Activated B cell treated with CpG ODN at 0.5 μM for 24 hours (primary cell): ENCODE measurements at regions of chr18 and their contacts with region 1.

Region 1: GRCh38 chr18:62714671-62715435 is 488 bp upstream of the PHLPP1 start:
- DNase-seq: peak; percentile 88
- ATAC-seq: peak; percentile 79
- H3K4me3 Mint-ChIP-seq: peak overlapping the region; percentile 91
- H3K27ac Mint-ChIP-seq: peak overlapping the region; percentile 89
- H3K4me1 Mint-ChIP-seq: peaks cover 37% of the 10 kb centered on the region
- H3K27me3 Mint-ChIP-seq: no peaks in the 10 kb centered on the region
- CTCF ChIP-seq: no peak

Region 2: GRCh38 chr18:62186774-62187542 is 527.9 kb before region 1 on chr18 and contains the starts of genes PIGN and RELCH:
- CTCF ChIA-PET with region 1: no interaction called
- POLR2A ChIA-PET with region 1: no interaction called
- intact Hi-C with region 1: loop called (anchors 1 kb)
- DNase-seq: peak; percentile 73
- ATAC-seq: peak; percentile 94
- H3K4me3 Mint-ChIP-seq: peak within 1 kb of the TSS; percentile 98
- H3K27ac Mint-ChIP-seq: peak within 1 kb of the TSS; percentile 95
- H3K4me1 Mint-ChIP-seq: peaks cover 58% of the 10 kb centered on the region
- H3K27me3 Mint-ChIP-seq: no peaks in the 10 kb centered on the region
- CTCF ChIP-seq: no peak
- total RNA-seq, gene PIGN: 26.4 and 29.4 TPM in 2 replicates
- total RNA-seq, gene RELCH: 45.4 and 59.0 TPM in 2 replicates

Region 3: GRCh38 chr18:62637807-62638687 is 76.8 kb before region 1 on chr18:
- CTCF ChIA-PET with region 1: interaction called, 3 read pairs
- POLR2A ChIA-PET with region 1: no interaction called
- intact Hi-C with region 1: loop called (anchors 1 kb)
- DNase-seq: peak; percentile 20
- ATAC-seq: peak; percentile 50
- H3K4me3 Mint-ChIP-seq: no peak overlapping the region
- H3K27ac Mint-ChIP-seq: no peak overlapping the region
- H3K4me1 Mint-ChIP-seq: no peaks in the 10 kb centered on the region
- H3K27me3 Mint-ChIP-seq: peaks cover 7% of the 10 kb centered on the region
- CTCF ChIP-seq: no peak

Region 4: GRCh38 chr18:62784966-62785413 is 70.1 kb after region 1 on chr18:
- CTCF ChIA-PET with region 1: no interaction called
- POLR2A ChIA-PET with region 1: interaction called, 4 read pairs
- intact Hi-C with region 1: loop called (anchors 1 kb)
- DNase-seq: no peak
- ATAC-seq: peak; percentile 25
- H3K4me3 Mint-ChIP-seq: peak overlapping the region; percentile 28
- H3K27ac Mint-ChIP-seq: no peak overlapping the region
- H3K4me1 Mint-ChIP-seq: peaks cover 26% of the 10 kb centered on the region
- H3K27me3 Mint-ChIP-seq: no peaks in the 10 kb centered on the region
- CTCF ChIP-seq: no peak

Region 5: DNA sequence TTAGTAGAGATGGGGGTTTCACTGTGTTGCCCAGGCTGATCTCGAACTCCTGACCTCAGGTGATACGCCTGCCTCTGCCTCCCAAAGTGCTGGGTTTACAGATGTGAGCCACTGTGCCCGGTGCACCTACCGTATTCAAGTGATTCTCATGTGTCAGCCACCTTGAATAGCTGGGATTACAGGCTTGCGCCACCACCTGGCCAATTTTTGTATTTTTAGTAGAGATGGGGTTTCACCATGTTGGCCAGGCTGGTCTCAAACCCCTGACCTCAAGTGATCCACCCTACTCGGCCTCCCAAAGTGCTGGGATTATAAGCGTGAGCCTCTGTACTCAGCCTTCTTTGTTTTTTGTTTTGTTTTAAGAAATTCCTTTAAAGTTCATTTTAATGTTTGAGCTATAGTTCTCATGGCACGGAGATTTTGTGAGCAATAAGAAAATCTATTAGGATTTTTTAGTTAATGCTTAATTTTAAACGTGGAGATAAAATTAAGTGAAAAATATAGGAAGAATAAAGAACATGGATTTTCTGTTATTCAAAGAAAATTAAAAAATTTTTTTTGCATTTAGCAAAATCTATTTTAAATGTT is 243.1 kb after region 1 on chr18:
- CTCF ChIA-PET with region 1: interaction called, 34 read pairs
- POLR2A ChIA-PET with region 1: interaction called, 8 read pairs
- intact Hi-C with region 1: loop called (anchors 1 kb)
- DNase-seq: no peak
- ATAC-seq: peak; percentile 77
- H3K4me3 Mint-ChIP-seq: no peak overlapping the region
- H3K27ac Mint-ChIP-seq: no peak overlapping the region
- H3K4me1 Mint-ChIP-seq: no peaks in the 10 kb centered on the region
- H3K27me3 Mint-ChIP-seq: no peaks in the 10 kb centered on the region
- CTCF ChIP-seq: no peak

Region 6: GRCh38 chr18:63155169-63155852 is 440.5 kb after region 1 on chr18:
- CTCF ChIA-PET with region 1: no interaction called
- POLR2A ChIA-PET with region 1: no interaction called
- intact Hi-C with region 1: loop called (anchors 2 kb)
- DNase-seq: peak; percentile 73
- ATAC-seq: peak; percentile 63
- H3K4me3 Mint-ChIP-seq: peak overlapping the region; percentile 84
- H3K27ac Mint-ChIP-seq: peak overlapping the region; percentile 99
- H3K4me1 Mint-ChIP-seq: peaks cover 99% of the 10 kb centered on the region
- H3K27me3 Mint-ChIP-seq: no peaks in the 10 kb centered on the region
- CTCF ChIP-seq: peak; percentile 76

Region 7: DNA sequence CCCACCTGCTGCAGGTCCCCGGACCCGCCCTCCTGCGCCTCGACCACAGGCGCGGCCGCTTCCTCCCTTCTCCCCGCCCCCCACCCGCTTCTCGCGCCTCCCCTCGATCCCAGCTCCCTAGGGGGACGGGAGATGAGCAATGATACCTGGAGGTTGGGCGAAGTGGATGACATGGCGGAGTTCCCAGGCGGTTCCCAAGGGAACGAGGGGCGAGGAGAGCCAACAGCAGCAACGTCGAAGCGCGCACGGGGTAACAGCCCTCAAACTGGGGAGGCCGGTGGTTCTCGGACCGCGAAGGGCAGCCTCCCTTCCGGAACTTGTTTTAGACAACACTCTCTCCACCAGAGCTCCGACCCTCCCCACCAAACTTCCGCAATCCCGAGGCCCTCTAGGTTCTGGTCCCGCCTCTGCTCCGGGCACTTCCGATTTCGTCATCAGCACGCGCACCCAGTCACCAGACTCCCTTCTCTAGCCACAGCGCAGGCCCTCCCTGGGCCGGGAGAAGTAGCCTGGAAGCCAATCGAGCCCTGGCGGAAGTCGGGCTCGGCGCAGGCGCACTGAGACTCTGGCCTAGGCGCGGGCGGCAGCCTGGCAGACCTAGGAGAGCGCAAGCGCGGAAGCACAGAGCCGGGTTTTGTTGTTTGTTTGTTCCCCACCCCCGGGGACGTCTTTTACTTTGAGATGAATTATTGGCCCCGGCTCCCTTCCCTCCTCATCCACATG is 707.4 kb after region 1 on chr18 and contains the start of gene VPS4B:
- CTCF ChIA-PET with region 1: interaction called, 4 read pairs
- POLR2A ChIA-PET with region 1: interaction called, 9 read pairs
- intact Hi-C with region 1: loop called (anchors 1 kb)
- DNase-seq: peak; percentile 100
- ATAC-seq: peak; percentile 96
- H3K4me3 Mint-ChIP-seq: peak within 1 kb of the TSS; percentile 99
- H3K27ac Mint-ChIP-seq: peak within 1 kb of the TSS; percentile 98
- H3K4me1 Mint-ChIP-seq: peaks cover 37% of the 10 kb centered on the region
- H3K27me3 Mint-ChIP-seq: peaks cover 2% of the 10 kb centered on the region
- CTCF ChIP-seq: no peak
- total RNA-seq, gene VPS4B: 66.2 and 66.8 TPM in 2 replicates